Activated T-helper 1 cell treated with anti-CD3 and anti-CD28 coated beads, Interleukin-12 subunit alpha, Interleukin-12 subunit beta, Interleukin-2, Interleukin-4 antibody, amounts not matched to agents 30 ng/mL and 10 ng/mL and 1 ng/mL, durations not matched to agents 14 hours and 24 hours and 36 hours (primary cell): ENCODE measurements at regions of chr17 and their contacts with region 1.

Region 1: DNA sequence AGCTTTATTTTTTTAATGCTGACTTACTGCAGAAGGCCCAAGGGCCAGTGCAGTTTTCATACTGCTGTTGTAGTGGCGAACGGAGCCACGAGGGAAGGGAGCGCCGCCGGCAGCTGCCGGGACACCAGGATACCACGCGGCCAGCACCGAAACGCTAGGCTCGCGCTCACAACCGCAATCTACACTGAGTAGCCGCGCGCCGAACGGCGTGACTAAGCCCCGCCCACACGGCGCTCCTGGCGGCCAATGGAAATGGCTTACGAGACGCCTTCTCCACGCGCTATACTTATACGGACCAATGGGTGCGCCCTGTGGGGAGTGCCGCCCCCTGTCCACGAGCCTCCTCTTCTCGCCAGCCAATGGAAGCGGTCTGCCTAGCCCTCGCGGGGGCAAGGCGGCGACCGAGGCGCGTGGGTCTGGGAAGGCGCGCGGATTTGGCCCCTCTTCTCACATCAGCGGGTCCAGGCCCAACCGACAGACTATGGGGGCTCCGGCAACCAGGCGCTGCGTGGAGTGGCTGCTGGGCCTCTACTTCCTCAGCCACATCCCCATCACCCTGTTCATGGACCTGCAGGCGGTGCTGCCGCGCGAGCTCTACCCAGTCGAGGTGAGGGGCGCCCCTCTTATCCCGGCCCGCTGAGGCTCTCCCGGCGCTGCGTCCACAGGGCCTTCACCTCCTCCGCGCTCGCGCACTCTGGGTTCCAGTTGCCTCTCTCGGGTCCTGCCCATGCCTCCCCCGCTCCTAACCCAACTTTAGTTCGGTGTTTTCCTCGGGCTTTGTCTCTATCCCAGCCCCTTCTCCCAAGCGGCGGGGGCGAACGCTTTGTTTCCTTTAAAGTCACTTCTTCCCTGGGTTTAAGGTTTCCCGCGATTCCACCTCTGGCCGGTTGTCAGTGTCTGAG is at the start of gene TMEM97:
- DNase-seq: peak; percentile 96
- H3K4me3 Mint-ChIP-seq: peak within 1 kb of the TSS; percentile 96
- H3K27ac Mint-ChIP-seq: peak within 1 kb of the TSS; percentile 94
- H3K4me1 Mint-ChIP-seq: peaks cover 48% of the 10 kb centered on the region
- H3K27me3 Mint-ChIP-seq: no peaks in the 10 kb centered on the region
- total RNA-seq, gene TMEM97: 60.9 and 64.5 TPM in 2 replicates

Region 2: DNA sequence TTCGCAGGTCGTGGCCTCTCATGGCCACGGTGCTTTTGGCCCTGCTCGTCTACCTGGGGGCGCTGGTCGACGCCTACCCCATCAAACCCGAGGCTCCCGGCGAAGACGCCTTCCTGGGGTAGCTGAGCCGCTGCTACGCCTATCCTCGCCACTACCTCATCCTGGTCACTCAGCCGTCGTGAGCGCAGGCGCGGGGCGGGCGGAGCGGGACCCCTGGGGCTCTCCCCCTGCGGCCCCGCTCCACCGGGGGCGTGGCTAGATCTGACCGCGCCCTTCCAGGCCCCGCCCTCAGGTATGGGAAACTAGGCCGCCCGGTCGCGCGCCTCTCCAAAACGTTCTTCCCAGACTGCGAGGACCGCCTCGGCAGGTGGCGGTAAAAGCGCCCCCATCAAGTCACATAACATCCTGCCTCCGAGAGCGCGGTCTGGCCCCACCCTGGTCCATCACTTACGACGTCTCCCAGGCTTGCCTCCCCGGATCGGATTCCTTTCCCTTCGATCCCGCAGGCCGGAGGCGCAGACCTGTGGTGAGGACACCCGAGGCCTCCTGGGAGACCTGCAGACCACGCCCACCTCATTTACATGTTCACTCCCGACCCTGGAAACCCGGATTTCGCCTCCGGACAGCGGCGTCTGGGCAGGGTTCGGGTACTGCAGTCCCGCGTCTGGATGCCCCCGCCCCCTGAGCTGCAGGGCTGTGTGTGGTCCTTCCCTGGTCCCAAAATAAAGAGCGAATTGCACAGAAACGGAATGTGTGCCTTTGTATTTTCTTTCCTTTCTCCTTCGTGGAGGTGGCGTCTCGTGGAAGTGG is 91.5 kb before region 1 on chr17:
- intact Hi-C with region 1: loop called (anchors 2 kb)
- DNase-seq: peak; percentile 9
- H3K4me3 Mint-ChIP-seq: peak overlapping the region; percentile 79
- H3K27ac Mint-ChIP-seq: no peak overlapping the region
- H3K4me1 Mint-ChIP-seq: peaks cover 14% of the 10 kb centered on the region
- H3K27me3 Mint-ChIP-seq: peaks cover 38% of the 10 kb centered on the region

Region 3: DNA sequence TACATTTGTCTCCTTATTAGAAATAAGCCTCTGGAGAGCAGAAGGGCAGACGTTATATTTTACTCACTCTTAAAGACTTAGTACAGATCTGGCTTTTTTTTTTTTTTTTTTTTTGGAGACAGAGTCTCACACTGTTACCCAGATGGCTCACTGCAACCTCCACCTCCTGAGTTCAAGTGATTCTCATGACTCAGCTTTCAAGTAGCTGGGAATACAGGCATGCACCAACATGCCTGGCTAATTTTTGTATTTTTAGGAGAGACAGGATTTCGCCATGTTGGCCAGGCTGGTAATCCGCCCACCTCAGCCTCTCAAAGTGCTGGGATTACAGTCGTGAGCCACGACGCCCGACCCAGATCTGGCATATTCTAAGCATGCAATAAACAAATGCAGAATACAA is 36.4 kb before region 1 on chr17:
- intact Hi-C with region 1: loop called (anchors 1 kb)
- DNase-seq: no peak
- H3K4me3 Mint-ChIP-seq: no peak overlapping the region
- H3K27ac Mint-ChIP-seq: no peak overlapping the region
- H3K4me1 Mint-ChIP-seq: peaks cover 11% of the 10 kb centered on the region
- H3K27me3 Mint-ChIP-seq: peaks cover 42% of the 10 kb centered on the region

Region 4: DNA sequence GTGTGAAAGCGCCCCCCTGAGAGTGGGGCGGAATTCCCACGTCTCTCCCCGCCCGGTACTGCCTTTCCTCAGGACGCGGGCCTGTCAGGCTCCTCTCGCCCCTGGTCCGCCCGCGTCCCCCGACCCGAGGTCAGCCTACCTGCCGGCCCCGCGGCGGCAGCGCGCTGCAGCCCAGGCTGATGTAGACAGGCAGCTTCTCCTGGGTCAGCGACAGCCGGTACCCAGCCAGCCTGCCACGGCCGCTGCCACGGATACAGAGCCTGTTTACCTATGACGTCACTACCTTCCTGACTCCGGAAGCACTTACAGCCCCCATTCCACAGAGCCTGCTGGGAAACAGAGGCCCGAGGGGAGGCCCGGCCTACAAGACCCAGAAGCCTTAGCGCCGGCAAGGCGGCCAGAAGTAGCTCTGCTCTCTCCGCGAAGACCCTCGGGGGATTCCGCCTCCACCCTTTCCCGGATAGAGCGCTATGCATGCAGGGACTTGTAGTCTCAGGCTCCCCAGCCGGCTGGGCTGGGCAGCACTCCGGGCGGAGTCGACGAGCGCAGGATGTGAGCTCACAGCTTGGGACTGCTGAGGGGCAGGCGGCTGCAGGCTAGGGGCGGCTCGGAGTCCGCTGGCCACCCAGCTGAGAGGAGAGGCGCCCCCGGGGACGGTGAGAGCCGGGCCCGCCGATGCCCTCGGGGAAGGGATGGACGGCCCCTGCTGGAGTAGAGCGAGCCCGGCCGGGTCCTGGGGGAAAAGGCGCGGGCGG is 16.4 kb after region 1 on chr17 and contains the starts of genes IFT20 and TNFAIP1:
- intact Hi-C with region 1: loop called (anchors 1 kb)
- DNase-seq: peak; percentile 98
- H3K4me3 Mint-ChIP-seq: peak within 1 kb of the TSS; percentile 99
- H3K27ac Mint-ChIP-seq: peak within 1 kb of the TSS; percentile 97
- H3K4me1 Mint-ChIP-seq: peaks cover 45% of the 10 kb centered on the region
- H3K27me3 Mint-ChIP-seq: no peaks in the 10 kb centered on the region
- total RNA-seq, gene IFT20: 21.3 and 25.8 TPM in 2 replicates
- total RNA-seq, gene TNFAIP1: 35.1 and 39.9 TPM in 2 replicates

Region 5: DNA sequence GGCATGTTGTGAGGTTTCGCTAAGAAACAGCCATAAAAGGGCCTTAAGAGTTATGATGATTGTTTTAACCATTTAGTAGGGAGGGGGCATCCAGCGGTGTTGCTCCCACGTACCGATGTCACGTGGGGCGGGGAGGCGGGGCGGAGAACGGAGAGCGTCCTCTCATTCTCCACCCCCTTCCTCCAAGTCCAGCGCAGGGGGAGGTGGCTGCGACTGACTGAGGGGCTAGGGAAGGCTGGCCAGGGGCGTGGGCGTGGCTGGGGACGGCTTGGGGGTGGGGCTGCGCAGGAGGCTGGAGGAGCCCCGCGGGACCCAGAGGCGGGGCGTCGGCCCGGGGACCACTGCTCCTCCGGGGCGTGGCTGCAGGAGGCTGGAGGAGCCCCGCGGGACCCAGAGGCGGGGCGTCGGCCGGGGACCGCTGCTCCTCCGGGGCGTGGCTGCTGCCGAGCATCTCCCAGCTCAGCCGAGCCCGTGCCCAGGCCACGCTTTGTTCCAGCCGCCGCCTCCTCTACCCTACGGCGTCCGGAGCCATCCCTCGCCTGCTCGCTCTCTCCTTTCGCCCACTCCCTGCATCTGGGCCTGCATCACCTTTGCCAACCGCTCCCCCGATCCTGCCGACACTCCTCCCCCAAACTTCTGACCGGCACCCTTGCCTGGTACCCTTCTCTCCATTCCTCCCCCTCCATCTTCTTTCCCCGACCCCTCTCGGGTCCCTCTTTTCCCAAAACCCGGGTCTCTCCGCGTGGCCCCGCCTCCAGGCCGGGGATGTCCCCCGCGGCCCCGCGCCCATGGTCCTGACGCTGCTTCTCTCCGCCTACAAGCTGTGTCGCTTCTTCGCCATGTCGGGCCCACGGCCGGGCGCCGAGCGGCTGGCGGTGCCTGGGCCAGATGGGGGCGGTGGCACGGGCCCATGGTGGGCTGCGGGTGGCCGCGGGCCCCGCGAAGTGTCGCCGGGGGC is 52.5 kb after region 1 on chr17 and contains the start of gene SARM1:
- intact Hi-C with region 1: loop called (anchors 2 kb)
- DNase-seq: peak; percentile 85
- H3K4me3 Mint-ChIP-seq: peak within 1 kb of the TSS; percentile 95
- H3K27ac Mint-ChIP-seq: peak within 1 kb of the TSS; percentile 98
- H3K4me1 Mint-ChIP-seq: peaks cover 14% of the 10 kb centered on the region
- H3K27me3 Mint-ChIP-seq: no peaks in the 10 kb centered on the region
- total RNA-seq, gene SARM1: 40.7 and 45.6 TPM in 2 replicates